ENCODE measurements at regions of chr21 and their contacts with region 1.

Region 1: GRCh38 chr21:27487676-27488075 is 520.8 kb upstream of the ADAMTS5 start:
- DNase-seq: no peak
- ATAC-seq: no peak
- H3K4me3 ChIP-seq: no peak overlapping the region
- H3K4me3 Mint-ChIP-seq: no peak overlapping the region
- H3K27ac ChIP-seq: no peak overlapping the region
- H3K27ac Mint-ChIP-seq: no peak overlapping the region
- H3K4me1 ChIP-seq: no peaks in the 10 kb centered on the region
- H3K4me1 Mint-ChIP-seq: no peaks in the 10 kb centered on the region
- H3K27me3 ChIP-seq: no peaks in the 10 kb centered on the region
- H3K27me3 Mint-ChIP-seq: no peaks in the 10 kb centered on the region

Region 2: DNA sequence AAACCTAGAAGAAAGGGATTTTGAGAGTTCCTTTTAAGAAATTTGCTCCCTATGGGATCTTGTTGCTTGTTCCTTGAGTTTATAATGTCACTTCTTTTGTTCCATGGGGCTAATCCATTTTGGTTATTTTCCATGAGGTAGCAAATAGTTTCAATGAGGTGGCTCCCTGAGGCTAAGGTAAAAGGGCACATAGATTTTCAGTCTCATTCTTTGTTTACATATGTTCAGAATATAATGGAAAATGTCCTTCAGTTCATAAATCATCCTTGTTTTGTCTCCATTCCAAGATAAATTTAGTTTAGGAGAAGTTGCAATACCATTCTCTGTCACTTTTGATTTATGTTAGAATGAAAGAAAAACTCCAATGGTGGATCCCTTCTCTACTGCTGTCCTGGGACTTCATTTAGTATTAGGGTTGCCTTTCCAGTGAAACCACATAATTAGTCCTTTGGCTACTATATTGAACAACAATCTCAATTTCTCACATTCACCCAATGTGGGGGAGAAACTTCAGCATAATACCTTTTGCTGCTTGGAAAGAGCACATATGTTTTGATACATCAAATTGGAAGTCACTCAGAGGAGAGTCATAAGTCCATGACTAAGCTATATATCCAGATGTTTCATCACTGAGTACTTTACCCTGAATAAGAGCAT is 439.9 kb before region 1 on chr21:
- CTCF ChIA-PET with region 1: no interaction called
- POLR2A ChIA-PET with region 1: no interaction called
- DNase-seq: no peak
- ATAC-seq: no peak
- H3K4me3 ChIP-seq: no peak overlapping the region
- H3K4me3 Mint-ChIP-seq: no peak overlapping the region
- H3K27ac ChIP-seq: no peak overlapping the region
- H3K27ac Mint-ChIP-seq: no peak overlapping the region
- H3K4me1 ChIP-seq: no peaks in the 10 kb centered on the region
- H3K4me1 Mint-ChIP-seq: no peaks in the 10 kb centered on the region
- H3K27me3 ChIP-seq: no peaks in the 10 kb centered on the region
- H3K27me3 Mint-ChIP-seq: no peaks in the 10 kb centered on the region

Region 3: GRCh38 chr21:28852706-28853105 is 1365.0 kb after region 1 on chr21:
- CTCF ChIA-PET with region 1: no interaction called
- POLR2A ChIA-PET with region 1: interaction called in 1 of 2 experiments, 10 read pairs
- DNase-seq: no peak
- ATAC-seq: no peak
- H3K4me3 ChIP-seq: no peak overlapping the region
- H3K4me3 Mint-ChIP-seq: no peak overlapping the region
- H3K27ac ChIP-seq: no peak overlapping the region
- H3K27ac Mint-ChIP-seq: no peak overlapping the region
- H3K4me1 ChIP-seq: no peaks in the 10 kb centered on the region
- H3K4me1 Mint-ChIP-seq: peaks cover 9 to 15% (median 10%) of the 10 kb centered on the region in 3 donors
- H3K27me3 ChIP-seq: no peaks in the 10 kb centered on the region
- H3K27me3 Mint-ChIP-seq: no peaks in the 10 kb centered on the region

Measured in T-cell (primary cell).